Calu3 (cell line): ENCODE measurements at regions of chr17 and their contacts with region 1.

Region 1: GRCh38 chr17:42112552-42113176 is at the start of gene DHX58:
- DNase-seq: peak; percentile 83
- H3K4me3 Mint-ChIP-seq: peak within 1 kb of the TSS; percentile 80
- H3K27ac Mint-ChIP-seq: peak within 1 kb of the TSS; percentile 88
- H3K4me1 Mint-ChIP-seq: peaks cover 7% of the 10 kb centered on the region
- H3K27me3 Mint-ChIP-seq: no peaks in the 10 kb centered on the region
- CTCF ChIP-seq: no peak
- total RNA-seq, gene DHX58: 45.6 and 77.5 TPM in 2 replicates

Region 2: GRCh38 chr17:41939044-41939692 is 173.5 kb before region 1 on chr17:
- CTCF ChIA-PET with region 1: no interaction called
- intact Hi-C with region 1: no loop called
- DNase-seq: no peak
- H3K4me3 Mint-ChIP-seq: no peak overlapping the region
- H3K27ac Mint-ChIP-seq: no peak overlapping the region
- H3K4me1 Mint-ChIP-seq: no peaks in the 10 kb centered on the region
- H3K27me3 Mint-ChIP-seq: peaks cover 29% of the 10 kb centered on the region
- CTCF ChIP-seq: no peak

Region 3: DNA sequence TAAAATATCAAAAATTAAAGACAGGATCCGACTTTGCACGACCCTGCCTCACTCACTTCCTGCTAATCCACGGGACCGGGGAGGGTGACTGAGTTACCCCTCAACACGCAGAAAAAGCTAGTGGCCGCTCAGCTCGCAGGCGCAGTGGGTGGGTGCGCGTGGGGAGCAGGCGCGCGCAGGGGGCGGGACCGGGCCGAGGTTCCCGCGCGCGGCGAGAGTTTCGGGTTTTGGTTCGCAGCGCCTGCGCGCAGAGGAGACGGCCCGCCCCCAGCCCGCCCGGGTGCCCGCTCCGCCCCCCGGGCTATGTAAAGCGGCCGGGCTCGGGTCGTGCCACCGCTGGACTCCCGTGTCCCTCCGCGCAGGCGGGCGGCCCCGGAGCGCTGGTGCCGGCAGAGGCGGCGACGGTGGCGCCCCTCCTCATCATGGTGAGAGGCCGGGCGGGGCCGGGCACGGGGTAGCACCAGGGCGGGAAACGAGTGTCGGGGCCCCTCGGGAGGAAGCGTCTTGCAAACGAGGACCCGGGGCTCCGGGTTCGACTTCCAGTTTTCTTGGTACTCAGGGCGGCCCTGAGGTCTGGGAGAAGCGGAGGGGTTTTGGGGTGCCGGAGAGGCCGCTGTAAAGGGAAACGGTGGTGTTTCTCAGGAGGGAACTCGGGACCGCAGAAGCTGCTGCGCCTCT is 146.1 kb before region 1 on chr17 and contains the start of gene CNP:
- CTCF ChIA-PET with region 1: interaction called, 8 read pairs
- intact Hi-C with region 1: loop called (anchors 1 kb)
- DNase-seq: peak; percentile 98
- H3K4me3 Mint-ChIP-seq: peak within 1 kb of the TSS; percentile 58
- H3K27ac Mint-ChIP-seq: peak within 1 kb of the TSS; percentile 48
- H3K4me1 Mint-ChIP-seq: peaks cover 16% of the 10 kb centered on the region
- H3K27me3 Mint-ChIP-seq: peaks cover 11% of the 10 kb centered on the region
- CTCF ChIP-seq: no peak
- total RNA-seq, gene CNP: 144 and 156 TPM in 2 replicates

Region 4: DNA sequence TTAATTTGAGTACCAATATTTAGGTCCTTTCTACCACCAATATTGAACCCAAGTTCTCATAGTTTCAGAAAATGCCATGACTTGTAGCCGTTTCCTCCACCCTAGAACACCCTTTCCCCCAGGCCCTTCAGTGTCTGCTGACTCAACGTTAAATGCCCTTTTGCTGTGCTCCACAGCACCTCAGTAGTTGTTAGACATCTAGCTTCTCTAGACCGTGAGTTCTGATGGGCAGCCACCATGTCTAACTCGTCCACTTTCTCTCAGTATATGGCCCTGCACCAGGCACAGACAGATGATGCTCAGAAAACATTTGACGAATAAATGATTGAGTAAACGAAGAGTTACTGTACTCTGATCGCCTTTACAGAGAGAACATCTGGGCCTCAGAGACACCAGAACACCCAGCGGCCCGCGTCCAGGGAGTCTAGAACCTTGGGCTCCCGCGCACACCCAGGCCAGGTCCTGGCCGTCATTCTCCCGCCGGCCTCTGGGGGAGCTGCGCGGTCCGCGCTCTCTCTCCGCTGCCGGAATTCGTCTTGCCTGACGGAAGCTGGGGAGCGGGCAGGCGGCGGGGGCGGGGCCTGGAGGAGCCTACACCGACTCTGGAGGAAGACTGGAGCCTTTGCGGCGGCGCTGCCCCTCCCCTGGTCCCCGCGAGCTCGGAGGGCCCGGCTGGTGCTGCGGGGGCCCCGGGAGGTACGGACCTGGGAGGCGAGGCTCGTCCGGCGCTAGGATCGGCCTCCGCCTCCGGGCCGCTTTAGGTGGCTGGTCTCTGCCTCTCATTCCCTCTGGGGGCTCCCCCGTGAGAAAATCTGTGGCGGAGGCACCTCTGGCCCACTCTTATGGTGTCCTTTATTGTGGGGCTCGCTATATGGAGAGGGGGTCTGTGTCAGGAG is 92.9 kb before region 1 on chr17 and contains the start of gene NKIRAS2:
- CTCF ChIA-PET with region 1: interaction called, 18 read pairs
- intact Hi-C with region 1: no loop called
- DNase-seq: peak; percentile 99
- H3K4me3 Mint-ChIP-seq: peak within 1 kb of the TSS; percentile 99
- H3K27ac Mint-ChIP-seq: peak within 1 kb of the TSS; percentile 99
- H3K4me1 Mint-ChIP-seq: peaks cover 69% of the 10 kb centered on the region
- H3K27me3 Mint-ChIP-seq: no peaks in the 10 kb centered on the region
- CTCF ChIP-seq: peak; percentile 96
- total RNA-seq, gene NKIRAS2: 55.7 and 58.4 TPM in 2 replicates

Region 5: GRCh38 chr17:42025191-42025579 is 87.5 kb before region 1 on chr17:
- CTCF ChIA-PET with region 1: interaction called, 18 read pairs
- intact Hi-C with region 1: loop called (anchors 1 kb)
- DNase-seq: no peak
- H3K4me3 Mint-ChIP-seq: peak overlapping the region; percentile 38
- H3K27ac Mint-ChIP-seq: peak overlapping the region; percentile 87
- H3K4me1 Mint-ChIP-seq: peaks cover 55% of the 10 kb centered on the region
- H3K27me3 Mint-ChIP-seq: no peaks in the 10 kb centered on the region
- CTCF ChIP-seq: no peak

Region 6: DNA sequence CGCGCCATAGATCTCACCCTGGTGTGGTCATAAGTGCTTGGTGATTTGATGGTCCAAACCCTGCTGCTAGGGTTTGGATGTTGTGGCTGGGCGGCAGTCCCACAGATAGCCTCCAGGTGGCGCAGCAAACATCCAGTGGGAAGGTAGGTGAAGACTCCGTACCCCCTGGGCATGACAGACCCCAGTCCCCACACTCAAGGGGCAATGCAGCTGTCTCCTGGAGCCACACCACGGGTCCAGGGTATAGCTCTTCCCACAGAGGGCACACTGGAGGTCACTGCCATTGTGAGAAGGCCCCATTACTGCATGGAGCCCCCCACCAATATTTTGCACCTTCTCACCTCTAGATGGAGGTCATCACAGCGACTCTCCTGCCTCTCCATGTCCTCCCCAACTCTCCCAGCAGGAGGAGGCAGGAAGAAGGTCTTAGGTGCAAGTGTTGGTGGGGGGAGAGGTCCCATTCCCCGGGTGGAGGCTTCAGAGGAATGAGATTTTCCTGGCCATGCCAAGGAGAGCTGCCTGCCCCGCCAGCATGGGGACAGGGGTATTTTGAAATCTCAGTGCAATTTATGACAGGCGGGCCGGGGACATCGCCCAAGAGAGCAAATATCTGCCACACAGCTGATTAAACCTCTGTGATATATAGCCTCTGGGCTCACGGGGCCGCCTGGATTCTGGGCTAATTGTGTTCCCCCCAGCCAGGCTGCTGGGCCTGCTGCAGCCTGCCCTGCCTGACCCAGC is 45.1 kb before region 1 on chr17:
- CTCF ChIA-PET with region 1: interaction called, 6 read pairs
- intact Hi-C with region 1: loop called (anchors 5 kb)
- DNase-seq: peak; percentile 85
- H3K4me3 Mint-ChIP-seq: no peak overlapping the region
- H3K27ac Mint-ChIP-seq: no peak overlapping the region
- H3K4me1 Mint-ChIP-seq: no peaks in the 10 kb centered on the region
- H3K27me3 Mint-ChIP-seq: peaks cover 67% of the 10 kb centered on the region
- CTCF ChIP-seq: peak; percentile 99